ENCODE measurements at regions of chr12 and their contacts with region 1.

Region 1: DNA sequence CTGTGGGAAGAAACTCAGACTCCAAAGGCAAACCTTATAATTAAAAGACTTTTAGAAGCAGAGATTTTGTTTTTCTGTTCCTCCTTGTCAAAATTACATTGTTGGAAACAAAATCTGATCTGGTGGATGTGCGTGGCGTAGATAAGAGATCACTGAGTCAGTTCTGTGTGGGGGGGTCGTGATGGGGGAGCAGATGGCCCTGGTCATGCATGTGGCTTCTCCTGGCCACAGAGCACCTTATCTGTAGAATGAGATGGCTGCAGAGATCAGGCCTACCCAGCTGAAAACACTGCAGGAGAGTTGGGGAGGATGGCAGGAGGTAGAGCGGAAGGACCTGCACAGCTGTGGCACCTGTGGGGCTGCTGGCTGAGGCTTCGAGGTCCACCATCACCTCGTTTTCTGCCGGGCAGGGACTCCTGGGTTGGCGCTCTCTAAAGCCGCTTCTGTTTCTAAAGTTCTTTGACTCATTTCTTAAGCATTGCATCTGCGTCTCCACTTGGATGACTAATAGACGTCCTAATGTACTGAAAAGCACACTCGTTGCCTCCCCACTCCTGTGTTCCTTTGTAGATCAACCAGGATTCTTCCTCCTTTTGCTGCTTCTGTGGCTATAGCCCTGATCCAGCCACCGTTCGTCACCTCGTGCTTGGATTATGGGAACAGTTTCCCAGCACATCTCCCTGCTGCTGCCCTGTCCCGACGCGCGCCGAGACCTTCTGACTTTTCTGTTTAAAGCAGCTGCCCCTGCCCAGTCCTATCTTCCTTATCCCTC is 93.4 kb downstream of the TSPAN9 start:
- DNase-seq: peak in 2 of 10 donors; percentile 56 to 66

Region 2: DNA sequence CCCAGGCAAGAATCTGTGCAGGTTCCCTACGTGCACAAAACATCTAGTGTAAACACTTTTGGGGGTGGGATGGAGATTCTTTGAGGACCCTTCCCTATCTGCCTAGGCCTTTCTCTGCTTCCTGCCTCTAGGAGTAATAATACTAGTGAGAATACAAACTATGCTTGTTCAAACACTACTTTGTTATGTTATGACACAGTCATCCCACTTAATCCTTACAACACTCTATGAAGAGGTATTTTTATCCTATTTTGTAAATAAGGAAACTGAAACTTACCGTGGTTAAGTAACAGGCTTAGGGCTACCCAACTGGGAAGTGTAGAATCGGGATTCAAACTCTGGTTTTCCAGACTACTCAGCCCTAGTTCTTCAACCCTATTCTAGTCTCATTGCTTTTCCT is 1969.6 kb after region 1 on chr12:
- intact Hi-C with region 1: loop called (anchors 10 kb)
- DNase-seq: no peak